ENCODE measurements at regions of chr5 and their contacts with region 1.

Region 1: DNA sequence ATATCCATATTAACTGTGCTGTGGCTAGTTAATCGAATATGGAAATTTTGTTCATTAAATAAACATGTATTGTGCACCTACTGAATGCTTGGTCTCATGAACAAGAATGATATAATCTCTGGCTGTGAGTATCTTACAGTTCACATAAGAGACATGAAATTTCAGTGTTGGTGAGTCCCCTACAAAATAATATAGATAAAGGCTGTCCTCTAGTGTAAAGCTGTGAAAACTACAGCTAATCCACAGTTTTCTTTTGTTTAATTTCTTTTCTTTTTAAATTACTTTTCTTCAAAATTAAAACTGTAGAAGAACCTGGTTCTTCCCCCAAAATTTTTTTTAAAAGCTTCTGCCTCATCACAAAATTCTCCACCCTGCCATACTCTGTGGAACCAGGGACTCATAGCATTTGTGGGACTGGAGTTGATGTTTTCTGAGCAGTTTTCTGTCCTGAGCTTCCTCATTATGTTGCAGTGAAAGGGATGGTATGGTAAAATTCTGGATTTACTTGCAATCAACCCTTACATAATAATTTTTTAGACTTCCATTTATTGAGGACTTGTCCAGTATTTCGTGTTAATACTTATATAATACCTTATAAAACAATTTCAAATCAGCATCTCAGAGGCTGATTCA is 135.0 kb downstream of the STK32A start:
- DNase-seq: no peak
- H3K4me3 ChIP-seq: no peak overlapping the region
- H3K27ac ChIP-seq: no peak overlapping the region
- H3K4me1 ChIP-seq: no peaks in the 10 kb centered on the region
- H3K27me3 ChIP-seq: no peaks in the 10 kb centered on the region; the same call in 1 of the 2 replicates
- CTCF ChIP-seq: peak; percentile 75

Region 2: GRCh38 chr5:147098233-147098790 is 271.5 kb before region 1 on chr5:
- CTCF ChIA-PET with region 1: interaction called, 4 read pairs
- POLR2A ChIA-PET with region 1: no interaction called
- intact Hi-C with region 1: loop called (anchors 5 kb)
- DNase-seq: no peak
- H3K4me3 ChIP-seq: no peak overlapping the region
- H3K27ac ChIP-seq: no peak overlapping the region
- H3K4me1 ChIP-seq: no peaks in the 10 kb centered on the region
- H3K27me3 ChIP-seq: no peaks in the 10 kb centered on the region
- CTCF ChIP-seq: peak; percentile 57

Region 3: DNA sequence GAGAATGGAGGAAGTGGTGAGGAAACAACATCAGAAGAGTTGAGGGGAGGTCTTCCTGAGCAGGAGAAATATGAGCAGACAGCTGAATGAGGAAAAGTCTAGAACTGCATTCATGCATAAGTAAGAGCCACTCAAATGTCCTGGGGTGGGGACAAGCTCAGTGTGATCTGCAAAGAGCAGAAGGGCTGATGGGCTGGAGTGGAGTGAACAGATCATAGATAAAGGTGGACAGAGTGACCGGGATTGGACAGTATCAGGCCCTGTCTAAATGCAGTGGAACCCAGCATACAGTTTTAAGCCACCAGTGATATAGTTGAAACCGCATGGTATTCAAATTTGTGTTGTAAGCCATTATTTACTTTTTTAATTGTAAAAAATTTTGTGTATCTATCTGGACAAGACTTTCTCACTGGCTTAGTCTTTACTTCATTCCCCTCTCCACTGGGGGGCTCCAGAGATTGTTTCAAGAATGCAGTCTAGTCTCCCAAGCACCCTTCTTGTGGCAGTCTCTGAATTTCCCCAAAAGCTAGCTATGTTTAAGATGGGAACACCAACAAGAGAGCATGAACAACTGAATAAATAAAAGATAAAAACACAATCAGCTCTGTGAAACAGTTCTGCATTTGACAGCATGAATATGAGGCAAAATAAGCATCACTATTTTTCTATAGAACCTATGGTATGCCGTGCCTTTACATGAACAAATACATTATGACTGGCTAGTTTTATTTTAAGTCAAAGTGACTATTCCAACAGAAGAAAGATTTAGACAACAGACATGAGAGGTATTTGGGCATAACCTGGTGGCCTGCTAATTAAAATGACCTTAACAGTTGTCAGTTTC is 145.7 kb before region 1 on chr5:
- CTCF ChIA-PET with region 1: interaction called, 3 read pairs
- POLR2A ChIA-PET with region 1: no interaction called
- intact Hi-C with region 1: loop called (anchors 1 kb)
- DNase-seq: no peak
- H3K4me3 ChIP-seq: no peak overlapping the region
- H3K27ac ChIP-seq: no peak overlapping the region
- H3K4me1 ChIP-seq: no peaks in the 10 kb centered on the region
- H3K27me3 ChIP-seq: no peaks in the 10 kb centered on the region; the same call in 1 of the 2 replicates
- CTCF ChIP-seq: peak; percentile 63

Region 4: GRCh38 chr5:147586832-147587231 is 217.0 kb after region 1 on chr5:
- CTCF ChIA-PET with region 1: no interaction called
- POLR2A ChIA-PET with region 1: no interaction called
- intact Hi-C with region 1: no loop called
- DNase-seq: no peak
- H3K4me3 ChIP-seq: no peak overlapping the region
- H3K27ac ChIP-seq: no peak overlapping the region
- H3K4me1 ChIP-seq: no peaks in the 10 kb centered on the region
- H3K27me3 ChIP-seq: no peaks in the 10 kb centered on the region
- CTCF ChIP-seq: no peak

Measured in PC-9 (cell line).